Dorsolateral prefrontal cortex (tissue), 120 donors: ENCODE measurements at regions of chr2 and their contacts with region 1.

Region 1: DNA sequence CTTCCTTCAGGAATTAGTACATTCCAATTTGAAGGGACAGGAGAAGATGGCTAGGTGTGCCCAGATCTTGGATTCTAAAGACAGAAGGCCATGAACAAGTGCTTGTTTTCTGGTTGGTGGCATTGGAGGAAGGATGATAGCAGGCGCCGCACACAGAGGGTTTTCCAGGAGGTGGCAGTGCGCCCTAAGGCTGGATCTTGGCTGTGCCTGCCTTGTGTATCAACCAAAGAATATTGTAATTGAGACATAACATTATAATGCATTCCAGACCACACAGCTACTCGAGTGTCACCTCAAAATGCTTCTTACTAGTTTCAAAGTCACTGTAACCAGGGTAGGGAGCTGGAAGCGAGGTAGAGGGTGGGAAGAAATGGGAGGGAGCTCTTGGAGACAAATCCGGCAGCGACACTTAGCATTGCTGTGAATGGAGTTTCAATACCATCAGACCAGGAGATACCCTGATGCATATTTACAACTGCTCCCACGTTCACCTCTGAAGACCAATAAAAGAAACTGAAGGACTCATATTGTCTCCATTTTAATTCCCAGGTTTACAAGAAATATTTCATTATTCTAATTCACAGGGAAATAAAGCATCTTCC is 42.5 kb downstream of the CPO start:
- DNase-seq: peak; percentile 81 to 94 (median 88)
- H3K4me3 ChIP-seq: peak overlapping the region; percentile 19 to 71 (median 52)
- H3K27ac ChIP-seq: peak overlapping the region in 51 of 59 donors; percentile 3 to 87 (median 67)
- H3K27me3 ChIP-seq: no peaks in the 10 kb centered on the region
- CTCF ChIP-seq: peak; percentile 72 to 98 (median 92)

Region 2: DNA sequence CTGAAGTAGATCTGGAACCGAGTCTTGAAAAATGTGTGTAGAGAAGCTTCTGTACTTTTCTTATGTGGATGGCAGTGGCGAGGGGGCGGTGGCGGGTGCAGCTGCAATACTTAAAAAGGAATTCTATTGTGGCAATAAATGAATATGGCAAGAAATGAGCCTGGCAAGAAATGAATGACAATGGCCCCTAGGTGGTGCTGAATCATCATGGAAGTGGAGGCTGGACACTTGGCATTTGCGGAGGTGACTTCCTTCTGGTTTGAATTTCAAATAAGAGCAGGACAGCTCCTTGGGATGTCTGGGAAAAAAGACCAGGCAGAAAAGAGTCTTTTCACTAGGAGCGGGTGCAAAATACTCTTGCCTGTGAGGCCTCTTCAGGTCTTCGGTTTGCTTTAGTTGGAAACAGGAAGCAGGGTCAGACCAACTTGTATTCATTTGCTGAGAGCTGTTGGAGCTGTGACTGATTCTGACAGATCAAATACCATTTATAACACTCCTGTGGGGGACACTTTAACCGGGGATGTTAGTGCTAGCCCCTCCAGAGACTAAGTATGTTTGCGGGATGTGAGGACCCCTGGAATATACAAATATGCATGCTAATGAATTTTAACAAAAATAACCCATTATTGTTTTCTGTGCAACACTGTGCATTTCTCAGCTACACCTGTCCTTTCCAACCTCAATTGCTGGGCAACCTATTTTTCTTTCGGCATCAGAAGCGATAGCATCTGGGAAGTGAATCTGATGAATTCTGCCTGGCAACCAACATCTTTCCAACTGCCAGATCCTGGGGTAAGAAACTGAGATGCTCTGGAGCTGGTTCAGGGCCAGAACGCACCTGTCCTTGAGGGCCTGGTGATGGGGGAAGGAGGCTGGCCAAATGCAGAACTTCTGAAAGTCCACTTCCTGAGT is 181.1 kb before region 1 on chr2:
- intact Hi-C with region 1: loop called (anchors 5 kb)
- DNase-seq: peak; percentile 42 to 86 (median 72)
- H3K4me3 ChIP-seq: peak overlapping the region in 33 of 59 donors; percentile 4 to 50 (median 28)
- H3K27ac ChIP-seq: peak overlapping the region in 20 of 59 donors; percentile 3 to 66 (median 43)
- H3K27me3 ChIP-seq: no peaks in the 10 kb centered on the region
- CTCF ChIP-seq: peak; percentile 63 to 90 (median 76)

Region 3: DNA sequence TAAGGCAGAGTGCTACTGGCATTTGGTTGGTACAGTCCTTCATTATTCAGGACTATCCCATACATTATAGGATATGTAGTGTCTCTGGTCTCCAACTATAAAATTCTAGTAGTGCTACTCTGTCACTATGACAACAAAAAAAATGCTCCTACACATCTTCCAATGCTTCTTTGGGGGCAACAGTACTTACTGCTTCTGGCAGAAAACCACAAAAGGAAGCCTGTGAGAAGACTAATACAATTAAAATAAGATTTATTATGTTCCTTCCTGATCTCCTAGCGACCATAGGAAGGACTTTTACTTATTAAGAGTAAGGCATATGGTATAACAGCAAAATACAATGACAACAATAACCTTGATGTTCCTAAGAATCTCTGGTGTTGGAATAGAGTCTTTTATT is 90.9 kb before region 1 on chr2:
- intact Hi-C with region 1: no loop called
- DNase-seq: no peak
- H3K4me3 ChIP-seq: no peak overlapping the region
- H3K27ac ChIP-seq: no peak overlapping the region
- H3K27me3 ChIP-seq: no peaks in the 10 kb centered on the region
- CTCF ChIP-seq: no peak

Region 4: GRCh38 chr2:207046724-207047123 is 64.9 kb after region 1 on chr2:
- intact Hi-C with region 1: loop called (anchors 2 to 10 kb)
- DNase-seq: peak in 2 of 10 donors; percentile 15 to 35
- H3K4me3 ChIP-seq: peak overlapping the region in 2 of 59 donors; percentile 11 to 13
- H3K27ac ChIP-seq: peak overlapping the region in 31 of 59 donors; percentile 3 to 65 (median 49)
- H3K27me3 ChIP-seq: no peaks in the 10 kb centered on the region
- CTCF ChIP-seq: peak in 48 of 56 donors; percentile 12 to 73 (median 42)

Region 5: DNA sequence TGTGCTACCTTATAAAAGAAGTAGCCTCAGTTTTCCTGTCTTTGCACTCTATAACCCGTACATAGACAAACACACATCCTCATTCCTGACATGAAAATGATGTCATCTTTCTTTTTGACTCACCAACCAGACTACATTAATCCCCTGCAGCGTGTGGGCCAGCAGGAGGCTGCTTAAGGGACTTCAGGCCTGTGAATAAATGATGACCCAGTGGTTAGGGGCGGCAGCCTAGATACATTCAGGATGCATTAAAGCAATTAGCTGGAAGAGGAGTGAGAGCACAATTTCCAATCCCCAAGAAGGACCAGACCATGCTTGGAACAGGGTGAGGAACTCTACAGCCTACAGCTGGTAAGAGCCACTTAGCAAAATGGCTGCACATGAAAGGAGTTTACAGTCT is 241.2 kb after region 1 on chr2:
- intact Hi-C with region 1: loop called (anchors 5 to 10 kb)
- DNase-seq: no peak
- H3K4me3 ChIP-seq: no peak overlapping the region
- H3K27ac ChIP-seq: no peak overlapping the region
- H3K27me3 ChIP-seq: no peaks in the 10 kb centered on the region
- CTCF ChIP-seq: no peak

Region 6: DNA sequence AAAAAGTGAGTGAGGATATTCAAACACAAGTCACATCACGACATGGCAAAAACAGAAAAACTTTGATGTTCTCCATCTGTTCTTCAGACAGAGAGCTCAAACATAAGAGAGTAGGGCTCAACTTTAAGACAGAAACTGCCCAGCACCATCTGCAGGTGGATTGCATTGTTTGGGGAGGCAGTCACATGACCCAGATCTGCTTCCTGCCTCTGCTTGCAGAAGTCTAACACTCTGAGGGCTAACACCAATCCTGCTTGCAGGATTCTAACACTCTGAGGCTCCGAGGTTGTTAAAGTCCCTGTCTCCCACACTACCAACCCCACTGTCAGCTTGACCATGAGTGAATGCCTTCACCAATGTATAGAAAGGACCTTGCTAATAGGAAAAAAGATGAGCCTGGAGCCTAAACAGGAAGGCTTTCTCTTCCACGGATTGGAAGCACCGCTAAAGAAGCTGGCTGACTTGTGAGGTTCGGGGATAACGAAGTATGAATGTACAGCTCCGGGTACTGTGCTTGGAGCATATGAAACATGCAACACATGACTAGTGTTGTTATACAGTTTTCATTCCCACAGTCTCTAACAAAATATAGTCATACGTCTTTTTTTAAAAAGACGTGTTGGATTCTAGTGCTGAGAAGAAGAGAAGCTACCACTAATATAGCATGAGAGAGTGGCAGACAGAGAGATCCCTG is 371.3 kb after region 1 on chr2:
- intact Hi-C with region 1: loop called in 1 of 2 experiments (anchors 5 kb)
- DNase-seq: peak in 9 of 10 donors; percentile 29 to 66 (median 50)
- H3K4me3 ChIP-seq: peak overlapping the region in 35 of 59 donors; percentile 1 to 48 (median 21)
- H3K27ac ChIP-seq: peak overlapping the region in 42 of 59 donors; percentile 3 to 79 (median 50)
- H3K27me3 ChIP-seq: no peaks in the 10 kb centered on the region
- CTCF ChIP-seq: peak in 14 of 56 donors; percentile 10 to 33 (median 20)